ENCODE measurements at regions of chr15 and their contacts with region 1.

Region 1: DNA sequence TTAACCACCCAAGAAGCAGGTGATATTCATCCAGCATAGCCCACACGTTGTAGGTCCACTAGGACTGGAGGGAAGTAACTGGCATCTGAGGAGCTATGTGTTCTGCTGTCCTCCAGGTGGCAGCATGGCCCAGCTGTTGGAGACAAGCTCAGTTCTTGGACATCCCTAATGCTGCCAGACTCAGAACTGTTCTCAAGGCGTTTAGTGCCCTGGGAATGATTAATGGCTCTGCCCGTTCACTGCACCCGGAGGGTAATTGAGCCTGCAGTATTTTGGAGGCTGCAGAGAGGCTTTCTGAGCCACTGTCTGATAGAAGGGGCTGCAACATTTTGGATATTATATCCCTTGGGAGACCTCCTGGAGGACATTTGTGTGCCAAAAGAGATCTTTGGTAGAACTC is 521.2 kb upstream of the SEMA6D start:
- DNase-seq: peak; percentile 55 to 86 (median 78)
- H3K4me3 ChIP-seq: peak overlapping the region in 1 of 59 donors; percentile 11
- H3K27ac ChIP-seq: no peak overlapping the region
- H3K27me3 ChIP-seq: peaks cover 0 to 4% (median 0%) of the 10 kb centered on the region in 45 donors
- CTCF ChIP-seq: peak; percentile 44 to 95 (median 87)

Region 2: GRCh38 chr15:48285329-48286214 is 1089.5 kb after region 1 on chr15:
- intact Hi-C with region 1: loop called in 1 of 2 experiments (anchors 5 kb)
- DNase-seq: peak in 4 of 10 donors; percentile 10 to 53 (median 41)
- H3K4me3 ChIP-seq: peak overlapping the region in 57 of 59 donors; percentile 3 to 68 (median 49)
- H3K27ac ChIP-seq: peak overlapping the region in 1 of 59 donors; percentile 30
- H3K27me3 ChIP-seq: no peaks in the 10 kb centered on the region
- CTCF ChIP-seq: peak; percentile 62 to 95 (median 82)

Region 3: GRCh38 chr15:48352474-48353072 is 1156.5 kb after region 1 on chr15:
- intact Hi-C with region 1: loop called in 1 of 2 experiments (anchors 5 kb)
- DNase-seq: peak in 7 of 10 donors; percentile 34 to 68 (median 46)
- H3K4me3 ChIP-seq: peak overlapping the region in 10 of 59 donors; percentile 4 to 34 (median 20)
- H3K27ac ChIP-seq: no peak overlapping the region
- H3K27me3 ChIP-seq: no peaks in the 10 kb centered on the region
- CTCF ChIP-seq: peak; percentile 56 to 90 (median 80)

Measured in dorsolateral prefrontal cortex (tissue), 120 donors.